SK-N-SH (cell line): ENCODE measurements at regions of chr1 and their contacts with region 1.

Region 1: GRCh38 chr1:212368073-212368484 is 46.6 kb downstream of the PACC1 start:
- DNase-seq: peak; percentile 60
- H3K4me3 ChIP-seq: no peak overlapping the region
- H3K27ac ChIP-seq: no peak overlapping the region
- H3K4me1 ChIP-seq: no peaks in the 10 kb centered on the region
- H3K27me3 ChIP-seq: no peaks in the 10 kb centered on the region
- CTCF ChIP-seq: peak; percentile 87
- EP300 ChIP-seq: no peak
- RAD21 ChIP-seq: peak; percentile 82

Region 2: DNA sequence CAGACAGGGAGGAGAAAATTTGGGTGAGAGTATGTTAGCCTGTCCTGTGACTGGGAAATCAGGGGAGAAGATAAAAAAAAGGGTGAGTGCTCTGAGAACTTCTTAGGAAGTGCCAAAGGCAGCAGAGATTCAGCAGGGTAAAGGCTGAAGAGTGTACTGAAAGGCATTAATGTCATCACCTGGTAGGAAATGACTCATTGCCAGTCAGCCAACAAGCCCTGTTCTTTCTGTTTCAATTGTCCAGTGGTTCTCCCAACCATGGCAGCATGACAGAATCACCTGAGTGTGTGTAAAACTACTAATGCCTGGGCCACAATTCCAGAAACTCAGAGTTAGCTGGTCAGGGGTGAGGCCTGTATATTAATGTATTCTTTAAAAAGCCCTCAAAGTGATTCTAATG is 416.2 kb before region 1 on chr1:
- CTCF ChIA-PET with region 1: no interaction called
- POLR2A ChIA-PET with region 1: no interaction called
- DNase-seq: no peak
- H3K4me3 ChIP-seq: no peak overlapping the region
- H3K27ac ChIP-seq: no peak overlapping the region
- H3K4me1 ChIP-seq: no peaks in the 10 kb centered on the region; a peak in 1 of 4 replicates
- H3K27me3 ChIP-seq: no peaks in the 10 kb centered on the region
- CTCF ChIP-seq: no peak
- EP300 ChIP-seq: no peak
- RAD21 ChIP-seq: no peak

Region 3: DNA sequence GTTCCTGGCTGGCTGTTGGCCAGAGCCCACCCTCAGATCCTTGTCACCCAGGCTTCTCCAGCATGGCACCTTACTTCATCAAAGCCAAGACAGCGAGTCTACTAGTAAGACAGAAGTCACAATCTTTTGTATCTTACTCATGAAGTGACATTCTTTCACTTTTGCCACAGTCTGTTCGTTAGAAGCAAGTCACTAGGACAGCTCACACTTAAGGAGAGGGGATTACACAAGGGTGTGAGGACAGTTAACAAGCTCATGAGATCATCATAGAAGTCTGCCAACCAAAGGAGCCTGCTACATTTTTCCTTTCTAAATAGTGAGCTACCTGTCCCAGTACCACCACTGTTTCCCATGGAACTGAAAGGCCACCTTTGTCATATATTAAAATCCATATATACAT is 14.9 kb before region 1 on chr1:
- CTCF ChIA-PET with region 1: interaction called, 10 read pairs
- POLR2A ChIA-PET with region 1: no interaction called
- DNase-seq: no peak
- H3K4me3 ChIP-seq: no peak overlapping the region
- H3K27ac ChIP-seq: no peak overlapping the region
- H3K4me1 ChIP-seq: no peaks in the 10 kb centered on the region; a peak in 1 of 4 replicates
- H3K27me3 ChIP-seq: no peaks in the 10 kb centered on the region
- CTCF ChIP-seq: no peak
- EP300 ChIP-seq: no peak
- RAD21 ChIP-seq: no peak